ENCODE measurements at regions of chr19 and their contacts with region 1.

Region 1: DNA sequence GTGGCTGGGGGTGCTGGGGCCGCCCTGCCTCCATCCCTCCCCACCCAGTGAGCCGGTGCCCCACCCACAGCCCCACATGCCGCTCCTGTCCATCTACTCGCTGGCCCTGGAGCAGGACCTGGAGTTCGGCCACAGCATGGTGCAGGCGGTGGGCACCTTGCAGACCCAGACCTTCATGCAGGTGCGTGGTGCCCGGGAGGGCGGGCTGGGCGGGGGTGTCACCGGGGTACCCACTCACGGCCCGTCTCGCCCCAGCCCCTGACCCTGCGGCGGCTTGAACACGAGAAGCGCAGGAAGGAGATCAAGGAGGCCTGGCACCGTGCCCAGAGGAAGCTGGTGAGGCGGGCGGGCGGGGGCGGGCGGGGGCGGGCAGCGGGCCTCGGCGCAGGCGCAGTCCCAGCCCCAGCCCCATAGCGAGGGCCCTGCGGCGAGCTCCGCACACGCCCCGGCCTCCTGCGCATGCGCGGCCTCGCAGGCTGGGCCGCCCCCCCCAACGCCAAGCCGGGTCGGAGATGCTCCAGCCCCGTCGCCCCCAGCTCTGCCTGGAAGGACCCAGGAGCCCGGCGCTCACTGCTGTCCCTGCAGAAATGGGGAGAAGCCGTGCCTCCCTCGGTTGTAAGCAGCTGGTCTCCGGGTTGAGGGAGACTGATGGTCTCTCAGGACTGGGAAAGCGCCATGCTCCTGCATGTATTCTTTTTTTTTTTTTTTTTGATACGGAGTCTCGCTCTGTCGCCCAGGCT is 7.7 kb downstream of the ARHGAP45 start:
- DNase-seq: peak; percentile 93
- H3K4me3 Mint-ChIP-seq: peak overlapping the region; percentile 59
- H3K27ac Mint-ChIP-seq: peak overlapping the region; percentile 75
- H3K4me1 Mint-ChIP-seq: peaks cover 66% of the 10 kb centered on the region
- H3K27me3 Mint-ChIP-seq: no peaks in the 10 kb centered on the region

Region 2: GRCh38 chr19:907183-907853 is 167.4 kb before region 1 on chr19:
- CTCF ChIA-PET with region 1: no interaction called
- intact Hi-C with region 1: loop called (anchors 5 kb)
- DNase-seq: peak; percentile 88
- H3K4me3 Mint-ChIP-seq: peak overlapping the region; percentile 41
- H3K27ac Mint-ChIP-seq: peak overlapping the region; percentile 97
- H3K4me1 Mint-ChIP-seq: peaks cover 72% of the 10 kb centered on the region
- H3K27me3 Mint-ChIP-seq: no peaks in the 10 kb centered on the region

Region 3: GRCh38 chr19:1039646-1040475 is 34.9 kb before region 1 on chr19 and contains the start of gene ABCA7:
- CTCF ChIA-PET with region 1: no interaction called
- intact Hi-C with region 1: loop called (anchors 2 kb)
- DNase-seq: peak; percentile 100
- H3K4me3 Mint-ChIP-seq: peak within 1 kb of the TSS; percentile 94
- H3K27ac Mint-ChIP-seq: peak within 1 kb of the TSS; percentile 65
- H3K4me1 Mint-ChIP-seq: peaks cover 41% of the 10 kb centered on the region
- H3K27me3 Mint-ChIP-seq: no peaks in the 10 kb centered on the region
- total RNA-seq, gene ABCA7: 24.4 to 30.1 TPM

Region 4: GRCh38 chr19:1050989-1051788 is 23.5 kb before region 1 on chr19:
- CTCF ChIA-PET with region 1: no interaction called
- intact Hi-C with region 1: no loop called
- DNase-seq: no peak
- H3K4me3 Mint-ChIP-seq: no peak overlapping the region
- H3K27ac Mint-ChIP-seq: peak overlapping the region; percentile 46
- H3K4me1 Mint-ChIP-seq: peaks cover 3% of the 10 kb centered on the region
- H3K27me3 Mint-ChIP-seq: no peaks in the 10 kb centered on the region

Region 5: DNA sequence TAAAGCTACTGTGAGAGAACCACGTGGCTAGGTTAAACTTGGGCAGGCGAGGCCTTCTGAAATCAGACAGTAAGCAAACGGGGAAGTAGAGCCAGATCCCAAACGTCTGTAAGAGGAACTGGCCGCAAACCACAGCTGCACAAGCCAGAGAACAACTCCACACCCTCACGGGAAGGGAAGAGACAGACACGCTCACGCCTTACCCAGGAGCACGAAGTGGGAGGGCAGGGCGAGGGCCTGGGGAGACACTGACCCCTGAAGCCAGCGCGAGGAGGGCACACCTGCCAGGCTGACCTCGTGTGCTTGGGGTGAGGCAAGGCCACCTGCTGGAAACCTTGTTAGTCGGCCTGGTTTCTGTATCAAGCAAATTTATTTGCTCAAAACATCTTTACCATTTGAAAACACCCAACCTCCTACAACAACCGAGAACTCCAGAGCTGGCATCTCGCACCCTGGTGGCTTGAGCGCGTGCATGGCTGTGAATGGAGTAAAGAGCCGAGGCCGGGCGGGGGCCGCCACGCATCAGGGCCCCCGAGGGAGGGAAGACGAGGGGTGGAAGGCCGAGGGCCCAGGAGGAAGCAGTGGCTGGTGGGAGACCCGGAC is 13.2 kb after region 1 on chr19:
- CTCF ChIA-PET with region 1: interaction called, 4 read pairs
- intact Hi-C with region 1: loop called (anchors 1 kb)
- DNase-seq: peak; percentile 59
- H3K4me3 Mint-ChIP-seq: peak overlapping the region; percentile 8
- H3K27ac Mint-ChIP-seq: peak overlapping the region; percentile 81
- H3K4me1 Mint-ChIP-seq: peaks cover 47% of the 10 kb centered on the region
- H3K27me3 Mint-ChIP-seq: no peaks in the 10 kb centered on the region

Region 6: DNA sequence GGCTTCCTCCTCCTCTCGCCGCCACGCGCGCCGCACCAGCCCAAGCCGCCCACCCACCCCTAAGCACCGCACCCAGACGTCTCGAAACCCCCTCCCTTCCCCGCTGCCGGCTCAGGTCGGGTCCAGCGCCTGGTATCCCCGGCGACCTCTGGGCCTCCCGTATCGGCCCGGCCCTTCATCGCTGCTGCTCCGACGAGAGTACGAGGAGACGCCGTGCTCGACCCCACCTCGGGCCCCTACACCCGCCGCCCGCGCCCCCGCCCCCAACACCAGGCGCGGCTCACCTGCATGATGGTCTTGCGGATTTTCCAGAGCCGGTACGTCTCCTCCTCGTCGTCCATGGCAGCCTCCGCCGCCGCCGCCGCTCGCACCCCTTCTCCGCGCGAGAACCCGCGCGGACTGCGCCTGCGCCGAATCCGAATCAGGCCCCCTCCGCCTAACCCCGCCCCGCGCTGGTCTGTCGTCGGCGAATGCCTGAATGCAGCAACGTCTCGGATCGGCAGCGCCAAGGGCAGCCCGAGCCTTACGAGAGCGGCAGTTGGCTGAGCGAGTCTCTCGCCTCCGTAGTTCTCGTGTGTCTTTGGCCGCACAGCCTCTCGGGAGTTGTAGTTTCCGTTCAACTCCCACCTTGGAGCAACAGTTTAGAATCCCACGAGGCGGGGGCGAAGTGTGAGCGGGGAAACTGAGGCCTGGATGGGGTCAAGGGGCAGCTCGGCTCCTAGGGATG is 20.4 kb after region 1 on chr19 and contains the start of gene POLR2E:
- CTCF ChIA-PET with region 1: interaction called, 3 read pairs
- intact Hi-C with region 1: loop called (anchors 1 kb)
- DNase-seq: peak; percentile 99
- H3K4me3 Mint-ChIP-seq: peak within 1 kb of the TSS; percentile 92
- H3K27ac Mint-ChIP-seq: peak within 1 kb of the TSS; percentile 92
- H3K4me1 Mint-ChIP-seq: peaks cover 65% of the 10 kb centered on the region
- H3K27me3 Mint-ChIP-seq: no peaks in the 10 kb centered on the region
- total RNA-seq, gene POLR2E: 238 to 258 TPM

Region 7: GRCh38 chr19:1131738-1132551 is 57.2 kb after region 1 on chr19:
- CTCF ChIA-PET with region 1: no interaction called
- intact Hi-C with region 1: loop called (anchors 2 kb)
- DNase-seq: peak; percentile 97
- H3K4me3 Mint-ChIP-seq: peak overlapping the region; percentile 95
- H3K27ac Mint-ChIP-seq: peak overlapping the region; percentile 97
- H3K4me1 Mint-ChIP-seq: peaks cover 48% of the 10 kb centered on the region
- H3K27me3 Mint-ChIP-seq: no peaks in the 10 kb centered on the region

Measured in activated naive CD4-positive, alpha-beta T cell treated with anti-CD3 and anti-CD28 coated beads for 36 hours (primary cell).